CD8-positive, alpha-beta T cell (primary cell): ENCODE measurements at regions of chr20 and their contacts with region 1.

Region 1: GRCh38 chr20:19692685-19693119 is 65.4 kb upstream of the RIN2 start:
- DNase-seq: peak in 8 of 9 experiments; percentile 8 to 55 (median 35)
- ATAC-seq: no peak
- H3K4me3 ChIP-seq: no peak overlapping the region
- H3K4me3 Mint-ChIP-seq: no peak overlapping the region
- H3K27ac ChIP-seq: no peak overlapping the region
- H3K27ac Mint-ChIP-seq: no peak overlapping the region
- H3K4me1 ChIP-seq: no peaks in the 10 kb centered on the region
- H3K4me1 Mint-ChIP-seq: no peaks in the 10 kb centered on the region
- H3K27me3 ChIP-seq: no peaks in the 10 kb centered on the region
- H3K27me3 Mint-ChIP-seq: peaks cover 13% of the 10 kb centered on the region
- CTCF ChIP-seq: peak; percentile 81

Region 2: GRCh38 chr20:19673575-19673974 is 19.1 kb before region 1 on chr20:
- CTCF ChIA-PET with region 1: no interaction called
- POLR2A ChIA-PET with region 1: no interaction called
- intact Hi-C with region 1: no loop called
- DNase-seq: no peak
- ATAC-seq: no peak
- H3K4me3 ChIP-seq: no peak overlapping the region
- H3K4me3 Mint-ChIP-seq: no peak overlapping the region
- H3K27ac ChIP-seq: no peak overlapping the region
- H3K27ac Mint-ChIP-seq: no peak overlapping the region
- H3K4me1 ChIP-seq: no peaks in the 10 kb centered on the region
- H3K4me1 Mint-ChIP-seq: no peaks in the 10 kb centered on the region
- H3K27me3 ChIP-seq: no peaks in the 10 kb centered on the region
- H3K27me3 Mint-ChIP-seq: peaks cover 10% of the 10 kb centered on the region
- CTCF ChIP-seq: no peak

Region 3: GRCh38 chr20:19784511-19785172 is 91.9 kb after region 1 on chr20:
- CTCF ChIA-PET with region 1: no interaction called
- POLR2A ChIA-PET with region 1: no interaction called
- intact Hi-C with region 1: no loop called
- DNase-seq: peak in 2 of 9 experiments; percentile 18 to 32
- ATAC-seq: no peak
- H3K4me3 ChIP-seq: no peak overlapping the region
- H3K4me3 Mint-ChIP-seq: no peak overlapping the region
- H3K27ac ChIP-seq: no peak overlapping the region
- H3K27ac Mint-ChIP-seq: no peak overlapping the region
- H3K4me1 ChIP-seq: no peaks in the 10 kb centered on the region
- H3K4me1 Mint-ChIP-seq: no peaks in the 10 kb centered on the region
- H3K27me3 ChIP-seq: no peaks in the 10 kb centered on the region
- H3K27me3 Mint-ChIP-seq: peaks cover 10% of the 10 kb centered on the region
- CTCF ChIP-seq: no peak

Region 4: GRCh38 chr20:19995220-19995863 is 302.6 kb after region 1 on chr20:
- CTCF ChIA-PET with region 1: interaction called, 5 read pairs
- POLR2A ChIA-PET with region 1: no interaction called
- intact Hi-C with region 1: loop called in 1 of 2 experiments (anchors 2 kb)
- DNase-seq: peak in 4 of 9 experiments; percentile 18 to 63 (median 38)
- ATAC-seq: no peak
- H3K4me3 ChIP-seq: no peak overlapping the region
- H3K4me3 Mint-ChIP-seq: no peak overlapping the region
- H3K27ac ChIP-seq: no peak overlapping the region
- H3K27ac Mint-ChIP-seq: no peak overlapping the region
- H3K4me1 ChIP-seq: no peaks in the 10 kb centered on the region
- H3K4me1 Mint-ChIP-seq: no peaks in the 10 kb centered on the region
- H3K27me3 ChIP-seq: no peaks in the 10 kb centered on the region
- H3K27me3 Mint-ChIP-seq: peaks cover 19% of the 10 kb centered on the region
- CTCF ChIP-seq: peak; percentile 69

Region 5: GRCh38 chr20:20568604-20569205 is 876.0 kb after region 1 on chr20:
- CTCF ChIA-PET with region 1: no interaction called
- POLR2A ChIA-PET with region 1: no interaction called
- intact Hi-C with region 1: loop called in 1 of 2 experiments (anchors 5 kb)
- DNase-seq: peak in 3 of 9 experiments; percentile 15 to 52 (median 39)
- ATAC-seq: no peak
- H3K4me3 ChIP-seq: no peak overlapping the region
- H3K4me3 Mint-ChIP-seq: no peak overlapping the region
- H3K27ac ChIP-seq: no peak overlapping the region
- H3K27ac Mint-ChIP-seq: no peak overlapping the region
- H3K4me1 ChIP-seq: no peaks in the 10 kb centered on the region
- H3K4me1 Mint-ChIP-seq: no peaks in the 10 kb centered on the region
- H3K27me3 ChIP-seq: no peaks in the 10 kb centered on the region
- H3K27me3 Mint-ChIP-seq: no peaks in the 10 kb centered on the region
- CTCF ChIP-seq: peak; percentile 59